ENCODE measurements at regions of chr5 and their contacts with region 1.

Region 1: DNA sequence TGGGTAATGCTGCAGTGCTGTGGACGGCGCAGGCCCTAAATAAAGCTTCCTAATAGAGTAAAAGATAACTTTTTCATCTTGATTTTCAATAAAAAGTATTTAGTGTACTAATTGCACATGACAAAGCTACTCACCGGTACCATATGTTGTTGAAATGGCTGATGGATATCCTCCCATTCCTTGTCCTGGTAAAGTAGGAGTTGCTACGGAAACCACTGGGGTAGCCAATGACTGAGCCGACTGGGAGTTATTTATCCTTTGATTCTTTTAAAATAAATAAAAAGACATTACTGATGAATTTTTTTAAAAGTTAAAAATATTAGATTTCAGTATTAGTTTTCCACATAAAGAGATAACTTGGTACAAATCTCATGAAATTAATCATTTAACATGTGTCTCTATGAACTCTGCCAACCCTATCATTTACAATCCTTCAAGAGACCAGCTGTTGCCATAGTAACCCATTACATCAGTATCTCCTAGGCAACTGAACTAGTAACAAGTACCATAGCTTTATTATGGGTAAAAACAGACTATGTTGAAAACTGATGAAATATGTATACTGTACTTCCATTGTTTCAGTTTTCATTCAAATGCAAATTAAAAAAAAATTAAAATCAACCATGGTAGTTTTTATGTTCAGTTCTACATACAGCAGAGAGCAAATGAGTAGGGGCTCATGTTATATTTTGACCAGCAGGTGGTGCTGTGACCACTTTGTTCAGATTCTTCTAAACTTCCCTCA is 153.7 kb downstream of the MEF2C start:
- DNase-seq: peak; percentile 61
- ATAC-seq: peak; percentile 81
- H3K4me3 ChIP-seq: no peak overlapping the region
- H3K27ac ChIP-seq: no peak overlapping the region
- H3K4me1 ChIP-seq: no peaks in the 10 kb centered on the region
- H3K27me3 ChIP-seq: peaks cover 0 to 6% of the 10 kb centered on the region in 2 experiments; a peak in 1 of 5 replicates
- CTCF ChIP-seq: peak; percentile 70
- EP300 ChIP-seq: no peak
- POLR2A ChIP-seq: no peak
- RAD21 ChIP-seq: peak; percentile 47; the same call in 1 of the 2 replicates

Region 2: DNA sequence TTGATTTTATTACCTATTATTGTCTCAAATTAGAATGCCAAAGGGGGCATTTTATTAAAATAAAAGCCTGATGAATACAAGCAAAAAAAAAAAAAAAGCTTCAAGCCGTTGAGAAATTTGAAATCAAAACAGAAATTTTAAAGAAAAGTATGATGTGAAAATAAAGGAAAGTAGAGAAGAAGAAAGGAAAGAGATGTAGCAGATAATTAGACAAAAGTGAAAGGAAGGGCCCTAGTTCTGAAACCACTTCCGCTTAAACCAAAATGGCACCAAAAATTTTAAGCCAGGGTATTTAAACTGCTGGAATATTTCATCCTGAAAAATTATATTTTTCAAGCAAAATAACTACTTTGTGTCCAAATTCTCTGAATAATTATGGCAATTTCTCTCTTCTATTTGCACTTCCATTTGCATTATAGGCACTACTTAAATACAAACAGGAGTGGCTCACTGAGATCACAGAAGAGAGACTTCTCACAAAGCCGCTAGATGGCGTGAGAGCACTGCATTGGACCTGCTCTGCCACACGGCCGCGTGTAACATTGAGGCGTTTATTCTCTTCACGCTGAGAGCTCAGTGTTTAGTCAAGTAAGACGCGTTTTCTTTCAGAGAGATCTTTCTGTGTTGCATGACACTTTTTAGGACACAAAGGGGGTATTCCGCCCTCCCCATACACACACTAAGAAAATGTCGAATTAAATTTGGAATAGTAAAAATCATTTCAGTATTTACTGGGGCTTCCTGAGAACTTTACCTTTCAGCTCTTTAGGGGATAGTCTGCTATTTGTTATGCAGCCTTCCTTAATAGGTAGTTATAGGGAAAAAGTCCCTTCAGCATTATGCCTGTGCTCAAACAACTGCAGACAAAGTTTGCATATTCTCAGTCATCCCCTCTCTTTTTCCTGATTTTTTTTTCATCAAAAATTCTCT is 948.2 kb before region 1 on chr5:
- CTCF ChIA-PET with region 1: interaction called, 10 read pairs
- POLR2A ChIA-PET with region 1: no interaction called
- in situ Hi-C with region 1: no loop called
- intact Hi-C with region 1: loop called (anchors 1 kb)
- DNase-seq: peak; percentile 70
- ATAC-seq: peak; percentile 100
- H3K4me3 ChIP-seq: no peak overlapping the region
- H3K27ac ChIP-seq: no peak overlapping the region
- H3K4me1 ChIP-seq: no peaks in the 10 kb centered on the region
- H3K27me3 ChIP-seq: peaks cover 0 to 1% of the 10 kb centered on the region in 2 experiments; a peak in 1 of 5 replicates
- CTCF ChIP-seq: peak; percentile 94
- EP300 ChIP-seq: no peak
- POLR2A ChIP-seq: no peak
- RAD21 ChIP-seq: peak; percentile 84

Region 3: GRCh38 chr5:89313804-89314588 is 584.7 kb after region 1 on chr5:
- CTCF ChIA-PET with region 1: no interaction called
- POLR2A ChIA-PET with region 1: no interaction called
- in situ Hi-C with region 1: no loop called
- intact Hi-C with region 1: loop called (anchors 5 kb)
- DNase-seq: no peak
- ATAC-seq: no peak
- H3K4me3 ChIP-seq: no peak overlapping the region
- H3K27ac ChIP-seq: no peak overlapping the region
- H3K4me1 ChIP-seq: no peaks in the 10 kb centered on the region
- H3K27me3 ChIP-seq: no peaks in the 10 kb centered on the region
- CTCF ChIP-seq: no peak
- EP300 ChIP-seq: no peak
- POLR2A ChIP-seq: no peak
- RAD21 ChIP-seq: no peak

Region 4: GRCh38 chr5:90184764-90185163 is 1455.5 kb after region 1 on chr5:
- CTCF ChIA-PET with region 1: no interaction called
- POLR2A ChIA-PET with region 1: no interaction called
- in situ Hi-C with region 1: loop called (anchors 10 kb)
- intact Hi-C with region 1: no loop called
- DNase-seq: no peak
- ATAC-seq: no peak
- H3K4me3 ChIP-seq: no peak overlapping the region
- H3K27ac ChIP-seq: no peak overlapping the region
- H3K4me1 ChIP-seq: no peaks in the 10 kb centered on the region
- H3K27me3 ChIP-seq: no peaks in the 10 kb centered on the region
- CTCF ChIP-seq: no peak
- EP300 ChIP-seq: no peak
- POLR2A ChIP-seq: no peak
- RAD21 ChIP-seq: no peak

Region 5: GRCh38 chr5:90264689-90265544 is 1535.7 kb after region 1 on chr5:
- CTCF ChIA-PET with region 1: interaction called, 7 read pairs
- POLR2A ChIA-PET with region 1: no interaction called
- in situ Hi-C with region 1: loop called (anchors 10 kb)
- intact Hi-C with region 1: loop called (anchors 1 kb)
- DNase-seq: peak; percentile 35
- ATAC-seq: peak; percentile 77
- H3K4me3 ChIP-seq: no peak overlapping the region
- H3K27ac ChIP-seq: no peak overlapping the region
- H3K4me1 ChIP-seq: no peaks in the 10 kb centered on the region
- H3K27me3 ChIP-seq: no peaks in the 10 kb centered on the region; a peak in 1 of 5 replicates
- CTCF ChIP-seq: peak; percentile 78
- EP300 ChIP-seq: no peak
- POLR2A ChIP-seq: no peak
- RAD21 ChIP-seq: peak; percentile 69

Region 6: DNA sequence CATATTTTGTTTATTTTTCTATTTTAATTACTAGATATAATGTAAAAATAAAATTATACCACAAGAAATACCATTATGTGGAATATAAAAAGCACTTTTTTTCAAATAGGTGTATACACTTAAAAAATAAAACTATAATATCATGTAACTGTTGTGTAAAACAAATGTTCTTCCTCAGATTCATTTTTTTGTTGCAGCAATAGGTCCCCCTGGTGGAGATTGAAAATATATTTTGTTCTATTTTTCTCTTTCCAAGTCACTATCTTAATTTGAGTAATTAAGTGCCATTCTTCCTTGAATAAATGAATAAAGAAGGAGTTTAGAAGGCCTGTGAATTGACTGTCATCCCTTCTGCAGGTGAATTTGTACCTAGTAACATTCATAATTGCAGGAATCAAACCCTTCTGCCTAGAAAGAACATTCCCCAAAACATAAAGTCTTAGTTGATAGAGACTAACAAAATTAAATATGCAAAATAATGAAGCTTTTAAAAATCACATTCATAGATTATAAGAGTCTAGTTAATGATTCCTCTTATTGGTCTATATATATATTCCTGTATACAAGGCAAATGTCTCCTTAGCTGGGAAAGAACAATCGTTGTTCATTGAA is 1656.9 kb after region 1 on chr5:
- CTCF ChIA-PET with region 1: interaction called, 6 read pairs
- POLR2A ChIA-PET with region 1: no interaction called
- in situ Hi-C with region 1: no loop called
- intact Hi-C with region 1: loop called (anchors 1 kb)
- DNase-seq: peak; percentile 24
- ATAC-seq: no peak
- H3K4me3 ChIP-seq: no peak overlapping the region
- H3K27ac ChIP-seq: no peak overlapping the region
- H3K4me1 ChIP-seq: no peaks in the 10 kb centered on the region
- H3K27me3 ChIP-seq: no peaks in the 10 kb centered on the region
- CTCF ChIP-seq: peak; percentile 34
- EP300 ChIP-seq: no peak
- POLR2A ChIP-seq: no peak
- RAD21 ChIP-seq: no peak

Measured in HepG2 (cell line).